HepG2 (cell line): ENCODE measurements at regions of chr2 and their contacts with region 1.

Region 1: DNA sequence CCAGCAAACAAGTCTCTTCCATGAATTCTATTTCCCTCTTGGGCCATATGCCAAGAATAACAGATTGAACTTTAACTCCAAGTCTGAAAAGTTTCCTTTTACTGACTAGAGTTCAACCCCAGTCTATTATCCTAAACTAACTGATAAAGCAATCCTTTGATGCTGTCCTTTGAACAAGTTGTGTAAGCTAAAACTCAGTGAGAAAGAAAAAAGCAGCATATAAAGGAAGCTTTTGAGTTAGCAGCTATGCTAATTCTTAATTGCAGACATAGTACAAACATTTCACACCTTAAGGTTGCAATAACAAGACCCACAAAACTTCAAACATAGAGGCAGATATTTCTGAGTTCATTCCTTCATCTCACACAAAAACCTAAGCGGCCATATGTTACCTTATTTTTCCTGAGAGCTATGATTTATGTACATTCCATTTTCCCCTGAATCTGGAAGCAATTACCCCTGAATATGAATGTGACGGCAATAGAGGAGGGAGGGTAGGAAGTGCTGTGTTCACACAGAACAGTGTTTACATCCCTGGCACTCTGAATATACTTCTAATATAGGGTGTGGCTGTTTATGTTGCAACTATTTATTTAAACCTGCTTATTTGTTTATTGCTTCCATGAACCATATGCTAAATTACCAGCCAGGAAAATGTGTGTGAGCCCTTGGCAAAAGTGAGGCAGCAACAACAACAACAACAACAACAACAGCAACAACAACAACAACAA is 180.6 kb downstream of the IRS1 start:
- DNase-seq: peak; percentile 98
- ATAC-seq: peak; percentile 86
- H3K4me3 ChIP-seq: peak overlapping the region in 1 of 3 experiments; percentile 18; a peak in 1 of 6 replicates
- H3K27ac ChIP-seq: peak overlapping the region; percentile 75
- H3K4me1 ChIP-seq: peaks cover 66% of the 10 kb centered on the region
- H3K27me3 ChIP-seq: no peaks in the 10 kb centered on the region
- CTCF ChIP-seq: no peak
- EP300 ChIP-seq: peak; percentile 26 to 100; a peak in 2 of 4 replicates
- POLR2A ChIP-seq: no peak
- RAD21 ChIP-seq: no peak

Region 2: DNA sequence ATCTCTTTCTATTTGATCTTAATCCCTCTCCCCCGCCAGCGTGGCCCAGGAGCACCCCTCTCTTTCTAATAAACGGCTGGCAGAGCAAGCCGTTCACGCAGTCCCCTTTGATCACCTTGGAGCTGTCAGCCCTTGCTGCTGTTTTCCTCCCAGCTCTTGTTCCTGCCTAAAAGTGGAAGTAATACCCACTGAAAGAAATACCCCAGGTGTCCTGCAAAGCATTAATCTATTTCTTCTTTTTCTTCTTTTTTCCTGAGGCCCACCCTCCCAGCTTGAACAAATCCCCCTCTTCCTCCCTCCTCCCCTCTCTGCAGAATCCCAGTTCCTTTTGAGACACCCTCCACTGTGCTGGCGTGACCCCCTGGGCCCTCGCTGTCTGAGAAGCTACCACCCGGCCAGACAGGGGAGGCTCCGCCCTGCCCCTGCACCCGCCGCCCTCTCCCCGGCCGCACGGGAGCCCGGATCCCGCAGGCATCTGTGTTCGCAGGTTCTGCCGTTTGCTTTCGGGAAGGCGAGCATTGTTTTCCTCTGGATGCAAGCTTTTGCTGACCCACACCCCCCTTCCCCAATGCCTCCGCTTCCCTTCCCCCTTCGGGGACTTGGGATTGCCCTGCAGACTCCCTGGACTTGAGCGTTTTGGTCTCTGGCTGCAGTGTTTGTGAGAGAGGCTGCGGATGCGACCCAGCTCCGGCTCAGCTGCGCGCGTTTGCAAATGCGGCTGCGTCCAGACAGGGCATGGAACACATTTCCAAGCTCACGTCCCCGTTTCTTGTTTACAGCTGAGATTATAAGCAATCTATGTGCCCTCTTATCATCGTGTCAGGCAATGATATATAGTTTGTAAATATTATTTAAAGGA is 588.0 kb before region 1 on chr2:
- CTCF ChIA-PET with region 1: no interaction called
- POLR2A ChIA-PET with region 1: interaction called, 3 read pairs
- in situ Hi-C with region 1: no loop called
- intact Hi-C with region 1: loop called (anchors 5 kb)
- DNase-seq: peak; percentile 73
- ATAC-seq: peak; percentile 97
- H3K4me3 ChIP-seq: peak overlapping the region; percentile 58 to 78 (median 65)
- H3K27ac ChIP-seq: peak overlapping the region; percentile 72
- H3K4me1 ChIP-seq: peaks cover 38% of the 10 kb centered on the region
- H3K27me3 ChIP-seq: no peaks in the 10 kb centered on the region
- CTCF ChIP-seq: no peak
- EP300 ChIP-seq: peak in 1 of 2 experiments; percentile 56; a peak in 1 of 4 replicates
- POLR2A ChIP-seq: peak; percentile 53 to 85; a peak in 3 of 4 replicates
- RAD21 ChIP-seq: peak; percentile 13; the same call in 1 of the 2 replicates

Region 3: GRCh38 chr2:226048611-226049010 is 570.4 kb before region 1 on chr2:
- CTCF ChIA-PET with region 1: no interaction called
- POLR2A ChIA-PET with region 1: no interaction called
- in situ Hi-C with region 1: no loop called
- intact Hi-C with region 1: no loop called
- DNase-seq: peak; percentile 9
- ATAC-seq: peak; percentile 68
- H3K4me3 ChIP-seq: no peak overlapping the region
- H3K27ac ChIP-seq: no peak overlapping the region
- H3K4me1 ChIP-seq: peaks cover 23% of the 10 kb centered on the region; the same call in 1 of the 2 replicates
- H3K27me3 ChIP-seq: no peaks in the 10 kb centered on the region
- CTCF ChIP-seq: no peak
- EP300 ChIP-seq: no peak
- POLR2A ChIP-seq: no peak
- RAD21 ChIP-seq: no peak

Region 4: GRCh38 chr2:226478109-226478809 is 140.8 kb before region 1 on chr2:
- CTCF ChIA-PET with region 1: no interaction called
- POLR2A ChIA-PET with region 1: interaction called, 3 read pairs
- in situ Hi-C with region 1: no loop called
- intact Hi-C with region 1: loop called (anchors 10 kb)
- DNase-seq: peak; percentile 89
- ATAC-seq: peak; percentile 99
- H3K4me3 ChIP-seq: peak overlapping the region; percentile 0 to 6 (median 5); a peak in 3 of 6 replicates
- H3K27ac ChIP-seq: peak overlapping the region; percentile 57
- H3K4me1 ChIP-seq: peaks cover 26% of the 10 kb centered on the region
- H3K27me3 ChIP-seq: no peaks in the 10 kb centered on the region
- CTCF ChIP-seq: 0 out of 2 replicates have a peak, but pooled peaks have one; percentile 12
- EP300 ChIP-seq: peak in 1 of 2 experiments; percentile 58; a peak in 2 of 4 replicates
- POLR2A ChIP-seq: peak; percentile 29 to 47; a peak in 2 of 4 replicates
- RAD21 ChIP-seq: no peak

Region 5: GRCh38 chr2:226495466-226496272 is 123.4 kb before region 1 on chr2:
- CTCF ChIA-PET with region 1: no interaction called
- POLR2A ChIA-PET with region 1: no interaction called
- in situ Hi-C with region 1: no loop called
- intact Hi-C with region 1: no loop called
- DNase-seq: no peak
- ATAC-seq: no peak; the same call in 2 of the 3 replicates
- H3K4me3 ChIP-seq: no peak overlapping the region
- H3K27ac ChIP-seq: no peak overlapping the region
- H3K4me1 ChIP-seq: peaks cover 21% of the 10 kb centered on the region
- H3K27me3 ChIP-seq: no peaks in the 10 kb centered on the region
- CTCF ChIP-seq: no peak
- EP300 ChIP-seq: no peak
- POLR2A ChIP-seq: no peak
- RAD21 ChIP-seq: no peak

Region 6: GRCh38 chr2:226583715-226584114 is 35.3 kb before region 1 on chr2:
- CTCF ChIA-PET with region 1: no interaction called
- POLR2A ChIA-PET with region 1: interaction called, 13 read pairs
- in situ Hi-C with region 1: no loop called
- intact Hi-C with region 1: loop called (anchors 5 kb)
- DNase-seq: peak; percentile 94
- ATAC-seq: peak; percentile 98
- H3K4me3 ChIP-seq: no peak overlapping the region
- H3K27ac ChIP-seq: peak overlapping the region; percentile 68
- H3K4me1 ChIP-seq: peaks cover 65% of the 10 kb centered on the region
- H3K27me3 ChIP-seq: no peaks in the 10 kb centered on the region
- CTCF ChIP-seq: no peak
- EP300 ChIP-seq: peak in 1 of 2 experiments; percentile 94; a peak in 2 of 4 replicates
- POLR2A ChIP-seq: no peak
- RAD21 ChIP-seq: no peak; the same call in 1 of the 2 replicates

Region 7: DNA sequence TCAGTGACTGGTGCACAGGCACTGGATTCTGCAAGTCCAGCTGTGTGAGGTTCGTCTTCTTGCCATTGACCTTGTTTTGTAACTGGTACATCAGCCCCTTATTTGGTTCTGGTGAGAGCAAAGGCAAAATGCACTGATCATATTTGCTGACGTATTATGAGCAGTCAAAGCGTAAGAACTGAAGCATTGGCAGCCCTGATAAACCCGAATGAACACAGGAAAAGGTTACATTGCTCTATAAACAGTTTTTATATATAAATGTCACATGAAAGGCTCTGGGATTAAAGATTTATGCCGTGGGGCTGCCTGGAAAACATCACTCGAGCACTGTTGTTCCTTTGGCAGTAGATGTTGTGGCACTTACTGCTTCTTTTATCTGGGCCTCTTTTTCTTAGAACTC is 12.6 kb after region 1 on chr2:
- CTCF ChIA-PET with region 1: no interaction called
- POLR2A ChIA-PET with region 1: no interaction called
- in situ Hi-C with region 1: no loop called
- intact Hi-C with region 1: no loop called
- DNase-seq: no peak
- ATAC-seq: no peak
- H3K4me3 ChIP-seq: no peak overlapping the region
- H3K27ac ChIP-seq: no peak overlapping the region
- H3K4me1 ChIP-seq: no peaks in the 10 kb centered on the region
- H3K27me3 ChIP-seq: no peaks in the 10 kb centered on the region
- CTCF ChIP-seq: no peak
- EP300 ChIP-seq: no peak
- POLR2A ChIP-seq: no peak
- RAD21 ChIP-seq: no peak

Region 8: DNA sequence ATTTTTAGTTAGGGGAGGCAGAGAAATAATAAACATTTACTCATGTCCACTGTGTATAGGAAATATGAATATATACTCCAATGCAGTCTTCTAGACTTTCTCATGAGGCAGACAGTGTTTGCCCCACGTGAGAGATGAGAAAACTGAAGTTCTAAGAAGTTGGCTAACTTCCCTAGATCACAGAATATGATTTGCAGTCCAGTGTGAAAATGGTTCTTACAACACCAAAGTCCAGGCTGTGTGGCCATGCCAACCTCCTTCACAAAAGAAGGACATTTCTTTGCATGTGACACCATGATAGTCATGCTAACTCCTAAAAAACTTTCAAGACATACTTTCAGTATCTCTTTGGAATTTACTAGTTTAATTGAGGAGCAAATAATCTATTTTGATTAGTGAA is 36.8 kb after region 1 on chr2:
- CTCF ChIA-PET with region 1: no interaction called
- POLR2A ChIA-PET with region 1: no interaction called
- in situ Hi-C with region 1: no loop called
- intact Hi-C with region 1: loop called (anchors 1 kb)
- DNase-seq: no peak
- ATAC-seq: no peak
- H3K4me3 ChIP-seq: no peak overlapping the region
- H3K27ac ChIP-seq: no peak overlapping the region
- H3K4me1 ChIP-seq: peaks cover 94% of the 10 kb centered on the region
- H3K27me3 ChIP-seq: no peaks in the 10 kb centered on the region
- CTCF ChIP-seq: no peak
- EP300 ChIP-seq: no peak
- POLR2A ChIP-seq: no peak
- RAD21 ChIP-seq: no peak

Region 9: GRCh38 chr2:226791487-226792081 is 172.5 kb after region 1 on chr2:
- CTCF ChIA-PET with region 1: no interaction called
- POLR2A ChIA-PET with region 1: no interaction called
- in situ Hi-C with region 1: loop called (anchors 10 kb)
- intact Hi-C with region 1: no loop called
- DNase-seq: no peak
- ATAC-seq: no peak
- H3K4me3 ChIP-seq: no peak overlapping the region
- H3K27ac ChIP-seq: peak overlapping the region; percentile 26
- H3K4me1 ChIP-seq: peaks cover 74% of the 10 kb centered on the region
- H3K27me3 ChIP-seq: no peaks in the 10 kb centered on the region
- CTCF ChIP-seq: no peak
- EP300 ChIP-seq: no peak
- POLR2A ChIP-seq: no peak
- RAD21 ChIP-seq: no peak

Region 10: DNA sequence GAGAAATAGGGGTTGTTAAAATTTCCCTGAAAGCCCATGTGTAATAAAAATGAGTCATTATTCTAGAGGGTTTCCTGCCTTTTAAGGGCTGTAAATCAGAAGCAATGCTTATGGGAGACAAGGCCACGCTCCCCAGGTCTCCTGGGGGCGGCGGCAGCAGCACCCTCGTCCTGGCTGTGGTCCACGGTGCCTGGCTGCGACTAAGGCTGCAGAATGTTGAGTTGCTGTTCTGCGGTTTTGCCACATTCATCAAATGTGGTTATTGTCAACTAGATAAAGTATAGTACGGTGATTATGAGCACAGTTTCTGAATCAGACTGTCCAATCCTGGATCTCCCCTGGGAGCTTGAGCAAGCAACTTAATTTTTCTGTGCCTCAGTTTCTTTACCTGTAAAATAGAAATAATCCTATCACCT is 841.0 kb after region 1 on chr2:
- CTCF ChIA-PET with region 1: no interaction called
- POLR2A ChIA-PET with region 1: no interaction called
- in situ Hi-C with region 1: no loop called
- intact Hi-C with region 1: no loop called
- DNase-seq: no peak
- ATAC-seq: no peak
- H3K4me3 ChIP-seq: no peak overlapping the region
- H3K27ac ChIP-seq: no peak overlapping the region
- H3K4me1 ChIP-seq: peaks cover 55% of the 10 kb centered on the region
- H3K27me3 ChIP-seq: no peaks in the 10 kb centered on the region
- CTCF ChIP-seq: no peak
- EP300 ChIP-seq: no peak
- POLR2A ChIP-seq: no peak
- RAD21 ChIP-seq: no peak